GM10248 (cell line): ENCODE measurements at regions of chr10 and their contacts with region 1.

Region 1: GRCh38 chr10:72126184-72126871 is 38.0 kb upstream of the SPOCK2 start:
- DNase-seq: peak; percentile 36
- CTCF ChIP-seq: peak; percentile 37

Region 2: DNA sequence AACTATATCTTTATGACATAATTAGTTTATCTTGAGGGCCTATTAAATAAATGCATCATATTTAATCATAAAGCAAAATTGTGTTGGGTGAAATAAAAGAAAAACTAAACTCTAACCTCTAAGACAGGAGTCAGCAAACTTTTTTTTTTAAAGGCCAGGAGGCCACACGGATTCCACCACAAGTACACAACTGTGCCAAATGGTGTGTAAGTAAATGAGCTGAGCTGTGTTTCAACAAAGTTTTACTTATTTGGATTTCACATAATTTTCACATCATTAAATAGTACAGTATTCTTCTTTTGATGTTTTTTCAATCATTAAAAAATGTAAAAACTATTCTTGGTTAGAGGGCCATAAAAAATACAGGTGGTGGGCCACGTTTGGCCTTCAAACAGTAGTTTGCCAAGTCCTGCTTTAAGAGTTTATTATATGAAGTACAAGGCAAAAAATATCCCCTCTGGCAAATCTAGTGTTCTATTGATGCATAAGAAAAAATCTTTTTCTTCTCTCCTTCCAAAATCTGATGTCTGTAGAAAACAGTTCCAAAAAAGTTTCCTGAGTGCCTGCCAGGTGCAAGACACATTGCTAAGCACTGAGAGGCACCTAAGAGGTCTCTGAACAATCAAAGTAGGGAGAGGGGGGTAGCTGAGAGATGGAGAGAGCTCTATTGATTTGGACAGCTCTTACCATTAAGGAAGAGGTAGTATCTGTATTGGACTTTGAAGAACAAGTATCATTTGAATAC is 11.4 kb before region 1 on chr10:
- CTCF ChIA-PET with region 1: interaction called, 13 read pairs
- POLR2A ChIA-PET with region 1: no interaction called
- DNase-seq: no peak
- CTCF ChIP-seq: no peak

Region 3: DNA sequence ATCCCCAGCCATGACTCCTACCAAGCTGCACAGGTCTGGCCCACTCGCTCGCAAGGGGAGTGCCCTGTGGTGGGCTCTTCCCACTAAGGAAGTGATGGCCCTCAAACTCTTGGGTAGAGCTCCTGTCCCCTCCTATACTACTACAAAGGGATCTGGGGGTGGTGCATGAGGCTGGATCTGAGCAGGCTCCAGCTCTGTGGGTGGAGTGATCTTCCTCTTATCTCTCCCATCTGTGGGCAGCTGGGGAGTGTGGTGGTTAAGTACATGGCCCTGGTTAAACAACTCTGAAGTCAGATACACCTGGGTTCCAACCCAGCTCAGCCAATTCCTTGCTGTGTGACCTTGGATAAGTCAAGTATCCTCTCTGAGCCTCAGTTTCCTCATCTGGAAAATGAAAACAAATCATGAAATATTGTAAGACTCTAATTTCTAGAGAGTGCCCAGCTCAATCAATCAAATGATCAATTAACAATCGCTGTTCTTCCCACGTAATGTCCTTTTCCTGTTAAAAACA is 164.7 kb after region 1 on chr10:
- CTCF ChIA-PET with region 1: no interaction called
- POLR2A ChIA-PET with region 1: no interaction called
- DNase-seq: no peak
- CTCF ChIP-seq: no peak

Region 4: GRCh38 chr10:72509206-72509799 is 383.0 kb after region 1 on chr10:
- CTCF ChIA-PET with region 1: no interaction called
- POLR2A ChIA-PET with region 1: no interaction called
- DNase-seq: no peak
- CTCF ChIP-seq: no peak